ENCODE measurements at regions of chr16 and their contacts with region 1.

Region 1: GRCh38 chr16:16033208-16033717 is 83.8 kb downstream of the ABCC1 start:
- DNase-seq: peak in 7 of 9 donors; percentile 14 to 45 (median 25)
- ATAC-seq: peak; percentile 83
- H3K4me3 ChIP-seq: no peak overlapping the region
- H3K4me3 Mint-ChIP-seq: peak overlapping the region in 8 of 10 donors; percentile 8 to 42 (median 35)
- H3K27ac ChIP-seq: peak overlapping the region; percentile 3
- H3K27ac Mint-ChIP-seq: peak overlapping the region; percentile 5 to 92 (median 77)
- H3K4me1 ChIP-seq: peaks cover 9 to 17% of the 10 kb centered on the region in 2 donors
- H3K4me1 Mint-ChIP-seq: peaks cover 7 to 28% (median 26%) of the 10 kb centered on the region in 7 donors
- H3K27me3 ChIP-seq: no peaks in the 10 kb centered on the region
- H3K27me3 Mint-ChIP-seq: no peaks in the 10 kb centered on the region

Region 2: DNA sequence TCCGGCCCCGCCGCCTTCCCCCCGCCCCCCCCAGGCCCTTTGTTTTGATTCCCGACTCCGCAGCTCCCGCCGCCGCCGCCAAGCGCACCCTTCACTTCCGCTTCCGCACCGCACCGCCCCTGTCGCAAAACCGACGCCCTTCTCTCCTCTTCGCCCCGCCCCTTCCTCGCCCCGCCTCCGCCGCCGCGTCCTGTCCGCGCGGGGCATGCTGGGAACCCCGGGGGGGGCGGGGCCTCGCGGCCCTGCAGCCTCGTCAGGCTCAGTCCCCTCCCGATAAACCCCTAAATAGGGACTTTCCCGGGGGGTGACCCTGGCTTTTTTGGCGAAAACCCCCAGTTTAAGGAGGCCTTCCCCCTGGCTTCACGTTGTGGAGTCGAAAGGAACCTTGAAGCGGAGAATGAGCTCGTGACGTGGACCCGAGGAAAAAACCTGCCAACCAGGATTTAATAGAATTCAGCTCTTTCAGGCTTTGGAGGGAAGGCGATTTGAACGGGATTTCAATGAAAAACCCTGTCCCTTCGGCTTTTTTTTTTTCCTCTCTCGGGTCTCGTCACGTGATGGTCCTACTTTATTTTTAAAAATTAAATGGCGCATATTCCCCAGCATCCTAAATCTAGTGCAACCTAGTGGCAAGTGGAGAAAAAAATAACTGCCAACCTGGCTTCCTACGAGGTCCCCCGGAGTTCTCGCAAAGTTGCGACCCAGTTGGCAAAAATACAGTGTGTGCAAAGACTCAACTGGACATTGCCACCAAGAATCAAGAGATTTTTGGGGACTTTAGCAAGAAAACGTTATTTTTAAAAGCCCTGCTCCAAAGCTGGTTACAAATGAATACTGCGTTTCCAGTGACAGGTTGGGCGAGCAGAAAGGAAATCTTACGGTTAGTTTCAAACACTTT is 390.0 kb before region 1 on chr16 and contains the start of gene MARF1:
- CTCF ChIA-PET with region 1: no interaction called
- POLR2A ChIA-PET with region 1: no interaction called
- intact Hi-C with region 1: no loop called
- DNase-seq: peak; percentile 98 to 100 (median 99)
- ATAC-seq: peak; percentile 96
- H3K4me3 ChIP-seq: peak within 1 kb of the TSS; percentile 100
- H3K4me3 Mint-ChIP-seq: peak within 1 kb of the TSS; percentile 88 to 96 (median 92)
- H3K27ac ChIP-seq: peak within 1 kb of the TSS; percentile 99
- H3K27ac Mint-ChIP-seq: peak within 1 kb of the TSS; percentile 93 to 99 (median 98)
- H3K4me1 ChIP-seq: peaks cover 32 to 48% of the 10 kb centered on the region in 2 donors
- H3K4me1 Mint-ChIP-seq: peaks cover 29 to 58% (median 50%) of the 10 kb centered on the region in 7 donors
- H3K27me3 ChIP-seq: no peaks in the 10 kb centered on the region
- H3K27me3 Mint-ChIP-seq: no peaks in the 10 kb centered on the region
- total RNA-seq, gene MARF1: 93.0 to 259 (median 185) TPM

Region 3: GRCh38 chr16:15874745-15875314 is 158.4 kb before region 1 on chr16:
- CTCF ChIA-PET with region 1: interaction called, 4 read pairs
- POLR2A ChIA-PET with region 1: no interaction called
- intact Hi-C with region 1: loop called in 1 of 2 experiments (anchors 1 kb)
- DNase-seq: peak in 2 of 9 donors; percentile 5 to 7
- ATAC-seq: no peak
- H3K4me3 ChIP-seq: no peak overlapping the region
- H3K4me3 Mint-ChIP-seq: no peak overlapping the region
- H3K27ac ChIP-seq: no peak overlapping the region
- H3K27ac Mint-ChIP-seq: peak overlapping the region in 2 of 9 donors; percentile 7 to 33
- H3K4me1 ChIP-seq: no peaks in the 10 kb centered on the region
- H3K4me1 Mint-ChIP-seq: peaks cover 0 to 12% (median 5%) of the 10 kb centered on the region in 7 donors
- H3K27me3 ChIP-seq: no peaks in the 10 kb centered on the region
- H3K27me3 Mint-ChIP-seq: no peaks in the 10 kb centered on the region

Region 4: DNA sequence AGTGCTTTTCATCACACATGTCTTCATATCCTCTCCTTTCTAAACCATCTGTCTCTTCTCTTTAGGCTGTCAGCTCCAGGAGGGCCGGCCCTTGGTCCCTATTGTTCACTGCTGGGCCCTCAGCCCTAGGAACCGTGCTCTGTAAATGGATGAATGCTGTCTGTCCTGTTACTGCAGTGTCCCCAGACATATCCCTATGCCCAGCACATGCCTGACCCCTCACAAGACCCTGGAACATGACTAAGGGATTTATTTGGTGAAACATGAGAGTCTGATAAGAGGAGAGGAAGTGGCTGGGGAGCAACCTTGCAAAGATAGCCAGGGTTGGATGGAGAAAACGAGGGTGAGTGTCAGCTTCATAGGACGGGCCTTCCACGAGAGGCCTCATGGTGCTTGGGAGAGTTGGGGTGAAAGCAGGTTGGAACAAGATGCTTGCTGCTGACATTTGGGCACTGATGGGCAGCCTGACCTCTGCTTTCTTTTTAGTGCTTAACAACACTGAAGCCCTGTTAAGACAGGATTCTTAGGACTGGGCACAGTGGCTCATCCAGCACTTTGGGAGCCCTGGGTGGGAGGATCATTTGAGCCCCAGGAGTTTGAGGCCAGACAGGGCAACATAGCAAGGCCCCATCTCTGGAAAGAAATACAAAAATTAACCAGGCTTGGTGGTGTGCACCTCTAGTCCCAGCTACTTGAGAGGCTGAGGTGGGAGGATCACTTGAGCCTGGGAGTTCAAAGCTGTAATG is 44.8 kb before region 1 on chr16:
- CTCF ChIA-PET with region 1: no interaction called
- POLR2A ChIA-PET with region 1: no interaction called
- intact Hi-C with region 1: no loop called
- DNase-seq: no peak
- ATAC-seq: peak; percentile 36
- H3K4me3 ChIP-seq: no peak overlapping the region
- H3K4me3 Mint-ChIP-seq: peak overlapping the region in 2 of 10 donors; percentile 9 to 52
- H3K27ac ChIP-seq: no peak overlapping the region
- H3K27ac Mint-ChIP-seq: peak overlapping the region in 7 of 9 donors; percentile 6 to 75 (median 46)
- H3K4me1 ChIP-seq: peaks cover 3 to 6% of the 10 kb centered on the region in 2 donors
- H3K4me1 Mint-ChIP-seq: peaks cover 41 to 68% (median 47%) of the 10 kb centered on the region in 7 donors
- H3K27me3 ChIP-seq: no peaks in the 10 kb centered on the region
- H3K27me3 Mint-ChIP-seq: no peaks in the 10 kb centered on the region

Region 5: GRCh38 chr16:16014329-16015144 is 18.7 kb before region 1 on chr16:
- CTCF ChIA-PET with region 1: no interaction called
- POLR2A ChIA-PET with region 1: no interaction called
- intact Hi-C with region 1: no loop called
- DNase-seq: no peak
- ATAC-seq: no peak
- H3K4me3 ChIP-seq: no peak overlapping the region
- H3K4me3 Mint-ChIP-seq: no peak overlapping the region
- H3K27ac ChIP-seq: no peak overlapping the region
- H3K27ac Mint-ChIP-seq: no peak overlapping the region
- H3K4me1 ChIP-seq: no peaks in the 10 kb centered on the region
- H3K4me1 Mint-ChIP-seq: peaks cover 0 to 20% (median 3%) of the 10 kb centered on the region in 7 donors
- H3K27me3 ChIP-seq: no peaks in the 10 kb centered on the region
- H3K27me3 Mint-ChIP-seq: no peaks in the 10 kb centered on the region

Region 6: DNA sequence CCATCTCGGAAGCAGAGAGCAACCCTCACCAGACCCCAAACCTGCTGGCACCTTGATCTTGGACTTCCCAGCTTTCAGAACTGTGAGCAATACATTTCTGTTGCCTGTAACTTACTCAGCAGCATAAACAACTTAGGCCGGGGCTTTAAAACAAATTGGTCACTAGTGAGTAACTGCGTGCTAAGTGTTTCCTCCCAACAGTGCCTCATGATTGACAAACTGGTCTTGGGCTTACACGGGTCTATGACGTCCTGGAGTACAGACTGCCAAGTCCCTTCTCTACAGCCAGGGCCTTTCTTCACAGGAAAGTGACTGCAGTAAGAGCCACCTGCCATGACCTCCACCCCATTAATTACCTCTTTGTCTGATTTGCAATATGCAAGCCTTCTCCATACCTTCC is 1300.8 kb after region 1 on chr16:
- CTCF ChIA-PET with region 1: no interaction called
- POLR2A ChIA-PET with region 1: no interaction called
- intact Hi-C with region 1: no loop called
- DNase-seq: no peak
- ATAC-seq: peak; percentile 64
- H3K4me3 ChIP-seq: no peak overlapping the region
- H3K4me3 Mint-ChIP-seq: no peak overlapping the region
- H3K27ac ChIP-seq: no peak overlapping the region
- H3K27ac Mint-ChIP-seq: peak overlapping the region in 1 of 9 donors; percentile 34
- H3K4me1 ChIP-seq: peaks cover 0 to 9% of the 10 kb centered on the region in 2 donors
- H3K4me1 Mint-ChIP-seq: peaks cover 15 to 49% (median 25%) of the 10 kb centered on the region in 7 donors
- H3K27me3 ChIP-seq: no peaks in the 10 kb centered on the region
- H3K27me3 Mint-ChIP-seq: no peaks in the 10 kb centered on the region